ENCODE measurements at regions of chr1 and their contacts with region 1.

Region 1: GRCh38 chr1:150876119-150876454 is 312 bp downstream of the ARNT start:
- DNase-seq: no peak
- H3K4me3 Mint-ChIP-seq: peak overlapping the region; percentile 84
- H3K27ac Mint-ChIP-seq: peak overlapping the region; percentile 85
- H3K4me1 Mint-ChIP-seq: peaks cover 30% of the 10 kb centered on the region
- H3K27me3 Mint-ChIP-seq: no peaks in the 10 kb centered on the region

Region 2: DNA sequence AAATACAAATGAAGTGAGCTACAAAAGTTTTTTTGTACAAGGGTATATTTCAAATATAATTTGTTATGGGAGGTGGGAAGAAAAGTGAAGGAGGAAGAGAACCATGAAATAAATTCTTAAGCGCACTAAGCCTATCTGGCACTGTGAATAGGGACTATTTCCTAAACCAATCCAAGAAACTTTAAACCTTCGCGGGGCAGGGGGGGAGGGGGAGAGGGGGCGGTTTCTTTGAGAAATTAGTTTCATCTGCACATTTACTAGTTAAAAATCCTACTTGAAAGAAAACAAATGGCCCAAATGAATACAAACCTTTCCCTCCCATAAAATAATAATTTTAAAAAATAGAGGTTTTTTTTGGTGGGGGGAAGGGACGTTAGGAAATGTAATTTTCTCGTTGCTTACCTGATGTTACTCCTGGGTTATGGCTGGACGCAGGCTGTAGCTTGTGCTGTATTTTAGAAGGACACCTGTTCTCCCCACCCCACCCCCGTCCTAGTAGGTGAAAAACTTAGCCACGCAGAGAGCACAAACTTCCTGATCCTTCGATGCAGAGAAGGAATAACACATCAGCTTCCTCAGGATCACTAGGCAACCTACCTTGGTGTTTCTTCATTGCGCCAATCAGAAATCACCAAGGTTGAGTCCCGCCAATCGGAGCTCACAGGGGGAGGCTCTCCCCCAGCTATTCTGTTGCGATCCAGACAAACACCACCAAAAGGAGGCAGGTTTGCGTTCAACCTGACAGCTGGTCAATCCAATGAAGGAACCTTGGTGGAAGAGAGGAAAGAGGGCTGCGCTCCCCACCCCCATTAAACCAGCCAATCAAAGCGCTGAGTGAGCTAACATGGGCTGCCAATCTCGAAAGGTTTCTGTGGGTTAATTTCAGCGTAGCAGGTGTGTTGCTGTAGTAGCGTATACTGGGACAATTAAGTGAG is 179.2 kb before region 1 on chr1 and contains the start of gene GOLPH3L:
- CTCF ChIA-PET with region 1: no interaction called
- POLR2A ChIA-PET with region 1: no interaction called
- intact Hi-C with region 1: loop called (anchors 2 kb)
- DNase-seq: peak; percentile 96
- H3K4me3 Mint-ChIP-seq: peak within 1 kb of the TSS; percentile 96
- H3K27ac Mint-ChIP-seq: peak within 1 kb of the TSS; percentile 84
- H3K4me1 Mint-ChIP-seq: peaks cover 28% of the 10 kb centered on the region
- H3K27me3 Mint-ChIP-seq: no peaks in the 10 kb centered on the region
- total RNA-seq, gene GOLPH3L: 26.1 to 29.1 TPM

Region 3: DNA sequence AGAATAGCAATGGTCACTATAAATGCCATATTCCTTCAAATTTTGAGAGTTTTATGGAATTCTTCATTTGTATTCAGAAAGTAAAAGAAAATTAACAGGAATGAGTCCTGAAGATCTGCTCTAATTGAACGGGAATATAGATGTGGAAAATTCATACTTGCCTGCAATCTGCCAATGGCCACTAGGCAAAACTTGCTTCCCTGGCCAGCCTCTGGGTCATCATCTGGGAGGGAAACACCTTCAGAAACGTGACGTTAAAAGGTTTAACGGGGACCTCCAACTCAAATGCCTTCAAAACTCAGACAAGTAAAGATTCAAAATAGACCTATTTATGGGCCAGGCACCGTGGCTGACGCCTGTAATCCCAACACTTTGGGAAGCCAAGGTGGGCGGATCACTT is 46.3 kb before region 1 on chr1:
- CTCF ChIA-PET with region 1: no interaction called
- POLR2A ChIA-PET with region 1: no interaction called
- intact Hi-C with region 1: no loop called
- DNase-seq: no peak
- H3K4me3 Mint-ChIP-seq: no peak overlapping the region
- H3K27ac Mint-ChIP-seq: no peak overlapping the region
- H3K4me1 Mint-ChIP-seq: no peaks in the 10 kb centered on the region
- H3K27me3 Mint-ChIP-seq: no peaks in the 10 kb centered on the region

Region 4: DNA sequence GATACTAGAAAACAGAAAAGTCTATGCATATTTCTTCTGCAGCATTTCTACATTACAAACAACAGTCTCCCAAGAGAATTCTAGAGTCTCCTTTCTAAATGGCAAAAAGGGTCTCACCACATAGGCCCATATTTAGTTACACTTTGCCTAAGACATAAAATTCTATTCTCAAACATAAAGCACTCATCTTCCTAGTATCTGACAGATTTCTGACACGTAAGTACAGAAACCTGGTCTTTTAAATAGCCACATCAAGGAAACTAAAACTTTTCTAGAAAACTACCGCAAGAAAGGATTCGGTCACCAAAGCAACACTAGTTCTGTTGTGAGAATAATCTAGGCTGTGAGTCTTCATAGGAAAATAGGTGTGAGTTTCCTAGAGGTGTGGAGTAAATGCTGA is 34.5 kb before region 1 on chr1:
- CTCF ChIA-PET with region 1: no interaction called
- POLR2A ChIA-PET with region 1: no interaction called
- intact Hi-C with region 1: loop called (anchors 1 kb)
- DNase-seq: no peak
- H3K4me3 Mint-ChIP-seq: no peak overlapping the region
- H3K27ac Mint-ChIP-seq: no peak overlapping the region
- H3K4me1 Mint-ChIP-seq: peaks cover 23% of the 10 kb centered on the region
- H3K27me3 Mint-ChIP-seq: no peaks in the 10 kb centered on the region

Measured in activated CD4-positive, alpha-beta memory T cell treated with anti-CD3 and anti-CD28 coated beads for 36 hours (primary cell).